ENCODE measurements at regions of chr10 and their contacts with region 1.

Region 1: GRCh38 chr10:30812018-30812851 is 182.7 kb upstream of the LYZL2 start:
- DNase-seq: peak; percentile 89
- H3K4me3 ChIP-seq: peak overlapping the region in 3 of 4 donors; percentile 0 to 29 (median 23)
- H3K27ac ChIP-seq: peak overlapping the region; percentile 70 to 94 (median 80)
- H3K4me1 ChIP-seq: peaks cover 0 to 84% (median 73%) of the 10 kb centered on the region in 4 donors
- H3K27me3 ChIP-seq: no peaks in the 10 kb centered on the region
- CTCF ChIP-seq: no peak
- EP300 ChIP-seq: peak in 2 of 4 donors; percentile 39 to 48
- POLR2A ChIP-seq: no peak

Region 2: GRCh38 chr10:30736685-30737232 is 75.5 kb before region 1 on chr10:
- intact Hi-C with region 1: loop called (anchors 2 kb)
- DNase-seq: peak; percentile 95
- H3K4me3 ChIP-seq: no peak overlapping the region
- H3K27ac ChIP-seq: peak overlapping the region in 3 of 4 donors; percentile 64 to 86 (median 78)
- H3K4me1 ChIP-seq: peaks cover 0 to 43% (median 34%) of the 10 kb centered on the region in 4 donors
- H3K27me3 ChIP-seq: no peaks in the 10 kb centered on the region
- CTCF ChIP-seq: no peak
- EP300 ChIP-seq: peak; percentile 17 to 96 (median 86)
- POLR2A ChIP-seq: no peak

Region 3: GRCh38 chr10:30980951-30981616 is 168.8 kb after region 1 on chr10:
- intact Hi-C with region 1: loop called (anchors 5 kb)
- DNase-seq: peak; percentile 91
- H3K4me3 ChIP-seq: no peak overlapping the region
- H3K27ac ChIP-seq: peak overlapping the region; percentile 46 to 73 (median 70)
- H3K4me1 ChIP-seq: peaks cover 0 to 26% (median 18%) of the 10 kb centered on the region in 4 donors
- H3K27me3 ChIP-seq: no peaks in the 10 kb centered on the region
- CTCF ChIP-seq: no peak
- EP300 ChIP-seq: peak; percentile 3 to 42 (median 31)
- POLR2A ChIP-seq: no peak

Measured in sigmoid colon (tissue), 7 donors.